ENCODE measurements at regions of chr14 and their contacts with region 1.

Region 1: DNA sequence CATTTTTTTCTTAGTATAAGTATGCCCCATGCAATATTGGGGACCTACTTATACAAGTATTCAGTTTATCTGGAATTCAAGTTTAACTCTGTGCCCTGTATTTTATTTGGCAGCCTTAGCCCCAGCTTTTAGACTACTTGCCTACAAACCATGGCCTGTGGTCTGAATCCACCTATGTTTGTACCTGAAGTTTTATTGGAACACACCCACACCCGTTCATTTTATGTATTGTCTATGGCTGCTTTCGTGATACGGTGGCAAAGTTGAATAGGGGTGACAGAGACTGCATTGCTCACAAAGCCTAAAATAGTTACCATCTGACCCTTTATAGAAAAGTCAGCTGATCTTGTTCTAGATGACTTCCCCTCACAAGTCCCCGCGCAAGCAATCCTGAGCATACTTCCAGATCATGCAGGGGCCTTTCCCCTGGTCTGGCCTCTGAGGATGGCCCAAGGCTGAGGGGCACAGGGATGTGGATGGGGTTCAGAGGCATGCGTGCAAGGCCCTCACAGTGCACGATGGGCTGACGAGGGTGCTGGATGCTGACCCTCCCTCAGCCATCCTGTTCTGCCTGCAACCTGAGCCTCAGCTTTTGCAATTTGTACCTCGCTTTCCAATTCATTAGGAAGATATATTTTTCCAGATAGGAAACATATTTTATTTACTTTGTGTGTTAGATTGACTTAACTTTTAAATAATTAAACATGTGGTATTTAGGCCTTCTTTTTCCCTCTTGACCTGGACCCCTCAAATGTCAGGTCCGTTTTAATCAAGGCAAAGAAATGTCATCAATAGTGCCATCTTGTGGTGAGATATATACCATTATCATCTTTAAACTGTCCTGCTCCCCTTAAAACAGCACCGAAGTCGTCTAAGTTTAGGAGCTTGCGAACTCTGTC is 527.3 kb upstream of the CCDC196 start:
- DNase-seq: no peak
- H3K4me3 Mint-ChIP-seq: no peak overlapping the region
- H3K27ac Mint-ChIP-seq: no peak overlapping the region
- H3K4me1 Mint-ChIP-seq: peaks cover 16% of the 10 kb centered on the region
- H3K27me3 Mint-ChIP-seq: peaks cover 1% of the 10 kb centered on the region

Region 2: GRCh38 chr14:65222440-65222858 is 736.5 kb before region 1 on chr14:
- CTCF ChIA-PET with region 1: interaction called, 6 read pairs
- POLR2A ChIA-PET with region 1: no interaction called
- intact Hi-C with region 1: loop called (anchors 1 kb)
- DNase-seq: peak; percentile 78
- H3K4me3 Mint-ChIP-seq: no peak overlapping the region
- H3K27ac Mint-ChIP-seq: peak overlapping the region; percentile 45
- H3K4me1 Mint-ChIP-seq: peaks cover 33% of the 10 kb centered on the region
- H3K27me3 Mint-ChIP-seq: no peaks in the 10 kb centered on the region

Region 3: GRCh38 chr14:65879248-65880009 is 79.5 kb before region 1 on chr14:
- CTCF ChIA-PET with region 1: interaction called, 20 read pairs
- POLR2A ChIA-PET with region 1: no interaction called
- intact Hi-C with region 1: loop called (anchors 5 kb)
- DNase-seq: peak; percentile 15
- H3K4me3 Mint-ChIP-seq: no peak overlapping the region
- H3K27ac Mint-ChIP-seq: peak overlapping the region; percentile 71
- H3K4me1 Mint-ChIP-seq: peaks cover 44% of the 10 kb centered on the region
- H3K27me3 Mint-ChIP-seq: no peaks in the 10 kb centered on the region

Region 4: GRCh38 chr14:65940056-65940733 is 18.7 kb before region 1 on chr14:
- CTCF ChIA-PET with region 1: interaction called, 41 read pairs
- POLR2A ChIA-PET with region 1: no interaction called
- intact Hi-C with region 1: no loop called
- DNase-seq: peak; percentile 48
- H3K4me3 Mint-ChIP-seq: no peak overlapping the region
- H3K27ac Mint-ChIP-seq: no peak overlapping the region
- H3K4me1 Mint-ChIP-seq: peaks cover 35% of the 10 kb centered on the region
- H3K27me3 Mint-ChIP-seq: no peaks in the 10 kb centered on the region

Region 5: DNA sequence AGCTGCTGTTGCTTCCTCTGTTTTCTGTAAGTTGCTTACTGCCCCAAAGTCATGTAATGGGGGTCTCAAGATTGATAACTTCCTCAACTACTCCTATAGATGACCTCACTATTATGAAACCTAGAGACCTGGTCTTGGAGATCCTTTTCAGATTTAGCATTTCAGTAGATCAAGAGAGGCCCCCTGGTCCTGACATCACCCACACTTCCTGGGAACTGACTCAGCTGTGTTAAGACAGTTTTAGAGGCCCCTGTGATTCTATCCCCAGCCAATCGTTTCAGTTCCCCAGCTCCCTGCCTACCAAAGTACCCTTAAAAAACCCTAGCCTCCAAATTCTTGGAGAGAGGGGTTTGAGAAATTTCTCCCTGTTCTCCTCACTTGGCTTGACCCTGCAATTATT is 1651.6 kb after region 1 on chr14:
- CTCF ChIA-PET with region 1: no interaction called
- POLR2A ChIA-PET with region 1: no interaction called
- intact Hi-C with region 1: no loop called
- DNase-seq: peak; percentile 35
- H3K4me3 Mint-ChIP-seq: no peak overlapping the region
- H3K27ac Mint-ChIP-seq: no peak overlapping the region
- H3K4me1 Mint-ChIP-seq: peaks cover 6% of the 10 kb centered on the region
- H3K27me3 Mint-ChIP-seq: peaks cover 2% of the 10 kb centered on the region